Left cardiac atrium (tissue), 4 donors: ENCODE measurements at regions of chr7 and their contacts with region 1.

Region 1: GRCh38 chr7:80659120-80660055 is 20.9 kb downstream of the CD36 start:
- DNase-seq: no peak
- ATAC-seq: peak; percentile 33 to 35

Region 2: GRCh38 chr7:80362010-80362618 is 297.3 kb before region 1 on chr7:
- intact Hi-C with region 1: no loop called
- DNase-seq: no peak
- ATAC-seq: no peak

Region 3: GRCh38 chr7:80439894-80440821 is 219.2 kb before region 1 on chr7:
- intact Hi-C with region 1: loop called in 1 of 2 experiments (anchors 10 kb)
- DNase-seq: no peak
- ATAC-seq: peak; percentile 27 to 87

Region 4: GRCh38 chr7:80517282-80517747 is 142.1 kb before region 1 on chr7:
- intact Hi-C with region 1: no loop called
- DNase-seq: no peak
- ATAC-seq: peak in 1 of 2 donors; percentile 29

Region 5: DNA sequence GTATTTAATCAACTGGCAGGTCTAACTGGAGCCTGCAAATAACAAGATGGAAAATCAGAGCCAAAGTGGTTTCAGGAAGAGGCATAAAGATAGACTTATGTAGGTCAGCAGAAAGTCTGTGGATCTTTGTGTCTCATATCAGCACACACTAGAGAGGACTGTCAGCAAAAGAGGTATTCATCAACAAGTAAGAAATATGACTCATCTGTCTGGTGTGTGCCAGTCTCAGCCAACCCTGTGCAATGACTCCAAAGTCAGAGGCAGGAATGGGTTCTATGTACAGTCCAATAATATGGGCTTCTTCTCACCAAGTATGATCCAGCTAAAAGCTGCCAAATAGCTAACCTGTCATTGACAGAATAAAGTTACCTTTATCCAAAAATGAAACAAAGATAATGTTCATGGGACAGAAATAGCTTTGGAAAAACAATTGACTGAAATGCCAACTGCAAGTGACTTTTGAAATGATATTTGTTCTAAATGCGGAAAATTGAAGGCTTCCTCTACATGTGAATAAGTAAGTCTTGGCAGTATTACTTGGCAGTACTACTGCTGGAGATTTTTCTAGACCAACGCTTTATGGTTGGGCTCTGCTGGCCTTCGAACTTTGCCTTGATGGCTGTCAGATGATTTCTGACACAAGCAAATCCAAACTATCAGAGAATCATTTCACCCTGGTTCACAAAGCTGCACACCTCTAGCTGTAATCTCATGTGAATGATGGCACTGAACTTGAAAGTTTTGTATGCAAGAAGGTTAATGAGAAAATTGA is 531.8 kb after region 1 on chr7:
- intact Hi-C with region 1: no loop called
- DNase-seq: no peak
- ATAC-seq: peak; percentile 94 to 95